HEK293T (cell line): ENCODE measurements at regions of chrX and their contacts with region 1.

Region 1: DNA sequence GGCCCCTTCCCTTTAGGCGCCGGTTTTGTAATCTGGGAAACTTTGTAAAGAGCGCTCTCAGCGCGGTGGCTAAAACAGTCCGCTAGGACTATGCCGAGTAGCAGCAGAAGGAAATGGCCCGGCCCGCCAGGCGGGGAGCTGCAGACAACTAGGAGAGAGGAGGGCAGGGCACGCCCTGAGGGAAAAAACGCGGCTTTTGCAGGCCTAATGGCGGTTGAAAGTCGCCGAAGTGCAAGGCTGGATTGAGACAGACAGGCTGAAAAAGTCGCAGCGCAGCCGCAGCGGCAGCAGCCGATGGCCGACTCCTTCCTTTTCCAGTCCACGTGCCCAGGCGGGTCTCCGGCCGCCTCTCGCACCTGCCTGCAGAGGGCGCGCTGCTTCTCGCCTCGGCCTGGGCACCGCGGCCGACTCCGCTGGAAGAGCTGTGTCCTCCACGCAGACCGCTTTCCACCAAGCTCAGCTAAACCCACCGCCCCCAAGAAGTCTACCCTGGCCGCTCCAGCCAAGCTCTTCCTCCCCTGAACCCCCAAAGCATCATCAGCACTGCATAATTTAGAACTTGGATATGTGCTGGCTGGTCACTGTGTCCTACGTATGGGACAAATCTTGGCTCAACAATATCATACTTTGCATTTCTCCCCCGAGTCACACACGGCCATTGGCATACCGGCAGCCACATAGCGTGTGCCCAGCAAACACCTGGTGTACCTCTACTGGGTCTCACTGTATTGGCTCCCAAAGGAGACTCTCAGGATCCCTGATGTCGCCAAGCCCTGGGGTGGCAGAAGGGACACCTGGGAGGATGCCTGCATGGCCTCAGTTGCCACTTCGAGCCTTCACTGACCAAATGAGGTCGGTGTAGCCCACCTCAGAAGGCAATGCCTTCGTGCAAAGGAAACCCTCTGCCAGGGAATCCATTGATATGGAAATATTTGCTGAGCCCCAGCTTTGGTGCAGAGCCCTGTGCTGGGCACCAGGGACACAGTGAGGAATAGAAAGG is 14.5 kb downstream of the SLC25A5 start:
- DNase-seq: peak; percentile 84

Region 2: GRCh38 chrX:119468930-119469635 is 13.7 kb before region 1 on chrX:
- CTCF ChIA-PET with region 1: interaction called, 10 read pairs
- POLR2A ChIA-PET with region 1: interaction called, 7 read pairs
- DNase-seq: peak; percentile 85

Region 3: DNA sequence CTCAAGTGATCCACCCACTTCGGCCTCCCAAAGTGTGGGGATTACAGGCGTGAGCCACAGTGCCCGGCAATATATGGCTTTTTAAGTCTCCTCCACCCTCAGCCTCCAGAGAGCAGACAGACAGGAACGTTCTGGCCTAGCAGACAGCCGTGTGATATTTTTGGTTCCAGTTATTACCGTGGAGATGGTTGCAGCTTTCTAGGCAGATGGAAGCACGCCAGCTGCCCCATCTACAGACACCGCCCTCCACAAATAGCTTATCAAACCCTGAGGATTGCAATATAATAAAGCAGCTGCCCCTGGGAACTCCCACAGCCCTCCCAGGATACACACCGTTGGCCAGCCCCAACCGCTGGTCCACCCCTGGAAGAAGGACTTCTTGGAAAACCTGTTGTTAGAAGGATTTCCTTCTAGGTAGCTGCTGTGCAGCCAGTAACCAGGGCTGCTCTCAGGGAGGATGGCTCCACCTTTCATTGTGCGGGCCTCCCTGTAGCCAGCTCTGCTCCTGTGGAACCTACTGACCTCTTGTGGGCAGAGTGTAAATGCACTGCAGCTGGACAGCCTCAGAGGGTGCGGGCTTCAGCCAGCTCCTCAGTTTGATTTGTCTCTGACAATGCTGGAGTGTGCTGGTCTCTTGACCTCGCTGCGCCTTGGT is 29.5 kb after region 1 on chrX:
- CTCF ChIA-PET with region 1: interaction called, 10 read pairs
- POLR2A ChIA-PET with region 1: no interaction called
- DNase-seq: peak; percentile 89

Region 4: DNA sequence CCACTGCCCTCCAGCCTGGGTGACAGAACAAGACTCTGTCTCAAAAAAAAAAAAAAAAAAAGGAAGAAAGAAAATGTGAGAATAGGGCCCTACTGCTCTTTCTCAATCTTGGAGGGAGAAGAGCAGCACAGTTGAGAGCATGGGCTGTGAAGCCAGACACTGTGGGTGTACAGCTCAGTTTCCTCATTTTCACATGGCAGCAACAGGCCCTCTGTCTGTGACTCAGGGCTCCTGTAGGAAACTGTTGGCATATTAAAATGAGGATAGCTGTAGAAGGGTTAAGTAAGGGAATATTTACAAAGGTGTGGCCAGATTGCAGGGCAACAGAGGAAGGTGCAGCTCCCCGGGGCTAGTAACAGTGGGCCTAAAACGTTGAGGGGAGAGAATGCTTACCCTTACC is 416.3 kb after region 1 on chrX:
- CTCF ChIA-PET with region 1: no interaction called
- POLR2A ChIA-PET with region 1: no interaction called
- DNase-seq: no peak